Dendritic cell treated with granulocyte-macrophage colony-stimulating factor and Interleukin-4, amounts not matched to agents 40 ng/mL and 50 ng/mL, for 4 days (primary cell): ENCODE measurements at regions of chr2 and their contacts with region 1.

Region 1: DNA sequence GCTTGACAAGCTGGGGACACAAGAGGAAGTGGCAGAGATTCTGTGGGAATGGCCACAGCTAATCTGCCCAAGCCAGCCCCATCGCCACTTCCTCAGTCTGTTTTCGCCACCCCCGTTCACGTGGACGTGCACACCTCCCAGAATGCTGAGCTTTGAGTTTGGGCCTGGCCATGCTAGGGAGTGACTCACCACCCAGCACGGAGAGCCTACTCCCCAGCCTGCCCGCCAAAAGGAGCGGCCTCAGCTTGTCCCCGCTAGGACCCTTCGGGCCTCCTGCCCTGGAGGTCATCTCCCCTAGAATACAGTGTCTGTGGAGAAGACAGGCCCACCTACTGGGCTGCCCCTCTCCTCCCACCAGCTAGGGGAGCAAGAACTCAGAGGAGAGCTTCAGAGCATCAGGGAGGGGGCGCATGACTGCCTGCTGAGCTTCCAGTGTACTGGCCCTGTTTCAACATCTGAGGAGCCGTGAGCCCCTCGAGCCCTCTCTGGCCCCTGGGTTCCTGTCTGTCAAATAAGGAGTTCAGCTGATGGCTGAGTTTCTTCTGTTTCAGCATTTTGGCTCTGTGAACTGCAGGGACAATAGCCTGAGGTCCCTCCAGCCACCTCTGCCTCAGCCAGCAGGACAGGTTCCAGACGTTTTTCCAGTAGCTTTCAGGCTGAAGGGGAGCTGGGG is 5.1 kb downstream of the SLC35F6 start:
- H3K4me3 Mint-ChIP-seq: peak overlapping the region; percentile 71
- H3K27ac Mint-ChIP-seq: peak overlapping the region; percentile 99
- H3K4me1 Mint-ChIP-seq: peaks cover 86% of the 10 kb centered on the region
- H3K27me3 Mint-ChIP-seq: no peaks in the 10 kb centered on the region

Region 2: GRCh38 chr2:26785431-26786206 is 16.4 kb after region 1 on chr2 and contains the start of gene CENPA:
- intact Hi-C with region 1: loop called (anchors 1 kb)
- H3K4me3 Mint-ChIP-seq: peak within 1 kb of the TSS; percentile 70
- H3K27ac Mint-ChIP-seq: peak within 1 kb of the TSS; percentile 67
- H3K4me1 Mint-ChIP-seq: peaks cover 28% of the 10 kb centered on the region
- H3K27me3 Mint-ChIP-seq: no peaks in the 10 kb centered on the region

Region 3: GRCh38 chr2:26988058-26988860 is 219.0 kb after region 1 on chr2:
- intact Hi-C with region 1: no loop called
- H3K4me3 Mint-ChIP-seq: no peak overlapping the region
- H3K27ac Mint-ChIP-seq: no peak overlapping the region
- H3K4me1 Mint-ChIP-seq: no peaks in the 10 kb centered on the region
- H3K27me3 Mint-ChIP-seq: peaks cover 3% of the 10 kb centered on the region